ENCODE measurements at regions of chr9 and their contacts with region 1.

Region 1: DNA sequence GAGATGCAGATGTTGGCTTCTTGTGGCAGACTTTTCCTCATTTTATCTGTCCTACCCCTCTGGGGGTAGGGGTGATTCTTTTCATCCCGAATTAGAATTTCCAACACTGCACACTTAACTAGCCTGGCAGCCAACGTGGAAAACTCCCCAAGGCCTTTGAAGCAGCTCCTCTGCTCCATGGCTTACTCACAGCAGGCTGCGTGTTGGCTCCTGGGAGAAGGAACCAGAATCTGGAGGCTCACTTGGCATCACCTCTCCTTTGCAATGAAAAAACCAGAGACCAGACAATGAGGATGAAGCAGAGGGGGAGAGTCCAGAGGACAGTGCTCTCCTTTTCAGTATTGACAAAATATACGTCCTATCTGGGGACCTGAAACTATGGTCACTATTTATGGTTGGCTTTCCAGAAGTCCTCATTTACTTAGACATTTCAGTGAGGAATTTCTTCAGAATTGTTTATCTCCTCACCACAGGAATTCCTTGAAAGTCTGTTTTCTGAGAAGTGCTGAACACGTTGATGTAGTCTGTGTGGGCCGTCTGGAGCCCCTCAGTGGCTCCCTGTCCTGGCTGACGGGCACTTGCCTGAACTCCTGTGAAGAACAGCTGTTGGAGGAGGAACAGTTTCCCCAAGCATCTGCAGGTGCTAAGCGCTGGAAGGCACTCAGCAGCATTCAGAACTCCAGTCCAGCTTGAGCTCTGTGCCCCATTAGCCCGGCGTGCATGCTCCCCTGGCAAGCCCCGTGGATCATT is 231.3 kb downstream of the RFK start:
- DNase-seq: no peak
- ATAC-seq: no peak
- H3K4me3 Mint-ChIP-seq: no peak overlapping the region
- H3K27ac Mint-ChIP-seq: no peak overlapping the region
- H3K4me1 Mint-ChIP-seq: no peaks in the 10 kb centered on the region
- H3K27me3 Mint-ChIP-seq: no peaks in the 10 kb centered on the region

Region 2: GRCh38 chr9:75728391-75728790 is 434.5 kb before region 1 on chr9:
- CTCF ChIA-PET with region 1: no interaction called
- POLR2A ChIA-PET with region 1: no interaction called
- intact Hi-C with region 1: no loop called
- DNase-seq: no peak
- ATAC-seq: no peak
- H3K4me3 Mint-ChIP-seq: no peak overlapping the region
- H3K27ac Mint-ChIP-seq: no peak overlapping the region
- H3K4me1 Mint-ChIP-seq: no peaks in the 10 kb centered on the region
- H3K27me3 Mint-ChIP-seq: peaks cover 4% of the 10 kb centered on the region

Region 3: DNA sequence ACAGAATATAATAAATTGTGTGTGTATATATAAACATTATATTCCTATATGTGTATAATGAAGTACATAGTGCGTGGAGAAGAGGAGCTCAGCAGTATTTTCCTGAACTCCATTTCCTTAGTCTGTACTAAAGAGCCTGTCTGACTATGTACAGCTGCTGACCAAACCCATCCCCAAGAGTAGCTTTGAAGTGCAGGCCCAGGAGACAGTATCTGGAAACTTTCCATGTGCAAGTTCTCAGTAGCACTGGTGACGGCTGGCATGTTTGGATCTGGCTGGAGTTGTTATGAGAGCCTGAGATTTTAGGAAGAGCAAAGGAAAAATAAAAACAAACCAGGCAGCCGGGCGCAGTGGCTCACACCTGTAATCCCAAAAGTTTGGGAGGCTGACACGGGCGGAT is 12.9 kb before region 1 on chr9:
- CTCF ChIA-PET with region 1: no interaction called
- POLR2A ChIA-PET with region 1: no interaction called
- intact Hi-C with region 1: loop called in 1 of 2 experiments (anchors 2 kb)
- DNase-seq: no peak
- ATAC-seq: no peak
- H3K4me3 Mint-ChIP-seq: no peak overlapping the region
- H3K27ac Mint-ChIP-seq: no peak overlapping the region
- H3K4me1 Mint-ChIP-seq: no peaks in the 10 kb centered on the region
- H3K27me3 Mint-ChIP-seq: no peaks in the 10 kb centered on the region

Region 4: DNA sequence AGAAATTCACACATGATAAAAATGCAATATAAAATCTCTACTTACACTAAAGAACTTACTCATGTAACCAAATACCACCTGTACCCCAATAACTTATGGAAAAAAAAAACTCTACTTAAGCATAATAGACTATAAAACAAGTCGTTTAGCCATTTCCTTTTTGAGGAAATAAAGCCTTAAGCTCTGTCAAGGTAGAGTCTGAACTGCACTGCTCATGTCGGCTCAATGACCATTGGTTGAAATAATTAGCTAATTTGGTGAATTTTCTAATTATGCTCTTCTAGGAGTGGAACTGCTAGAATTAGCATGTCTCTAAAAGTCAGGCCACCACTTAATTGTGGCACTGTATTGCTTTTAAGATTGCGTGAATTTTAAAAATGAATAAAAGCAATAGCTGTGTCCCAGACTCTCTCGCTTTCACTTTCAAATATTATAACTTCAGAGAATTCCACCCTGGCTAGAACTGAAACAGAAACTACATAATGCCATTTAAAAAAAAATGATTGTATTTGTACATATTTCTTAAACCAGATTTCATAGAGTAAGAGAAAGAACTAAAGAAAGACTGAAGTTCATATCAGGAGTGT is 488.3 kb after region 1 on chr9:
- CTCF ChIA-PET with region 1: no interaction called
- POLR2A ChIA-PET with region 1: no interaction called
- intact Hi-C with region 1: no loop called
- DNase-seq: no peak
- ATAC-seq: peak; percentile 60
- H3K4me3 Mint-ChIP-seq: peak overlapping the region; percentile 33
- H3K27ac Mint-ChIP-seq: no peak overlapping the region
- H3K4me1 Mint-ChIP-seq: peaks cover 26% of the 10 kb centered on the region
- H3K27me3 Mint-ChIP-seq: no peaks in the 10 kb centered on the region

Region 5: DNA sequence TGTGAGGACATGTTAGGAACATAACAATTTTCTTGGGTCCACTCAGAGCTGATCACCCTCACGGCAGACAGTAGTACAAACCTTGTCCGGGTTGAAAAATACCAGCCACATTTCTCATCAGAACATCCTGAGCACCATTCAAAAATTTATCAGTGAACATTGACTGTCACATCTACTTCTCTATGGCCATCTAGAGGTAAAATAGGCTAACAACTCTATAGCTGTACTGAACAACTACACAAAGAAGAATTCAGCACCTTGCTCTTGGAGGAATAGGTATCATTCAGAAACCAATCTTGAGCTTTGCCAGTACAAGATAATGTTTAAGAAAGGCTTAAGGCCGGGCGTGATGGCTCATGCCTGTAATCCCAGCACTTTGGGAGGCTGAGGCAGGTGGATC is 909.1 kb after region 1 on chr9:
- CTCF ChIA-PET with region 1: no interaction called
- POLR2A ChIA-PET with region 1: no interaction called
- intact Hi-C with region 1: no loop called
- DNase-seq: no peak
- ATAC-seq: no peak
- H3K4me3 Mint-ChIP-seq: no peak overlapping the region
- H3K27ac Mint-ChIP-seq: no peak overlapping the region
- H3K4me1 Mint-ChIP-seq: no peaks in the 10 kb centered on the region
- H3K27me3 Mint-ChIP-seq: peaks cover 7% of the 10 kb centered on the region